Mucosa of descending colon (tissue), 3 donors: ENCODE measurements at regions of chr20 and their contacts with region 1.

Region 1: GRCh38 chr20:57596998-57597939 is 23.0 kb downstream of the ZBP1 start:
- DNase-seq: peak; percentile 77 to 88 (median 85)
- ATAC-seq: peak; percentile 76
- H3K4me3 ChIP-seq: no peak overlapping the region
- H3K4me1 ChIP-seq: peaks cover 19% of the 10 kb centered on the region
- CTCF ChIP-seq: peak; percentile 91

Region 2: DNA sequence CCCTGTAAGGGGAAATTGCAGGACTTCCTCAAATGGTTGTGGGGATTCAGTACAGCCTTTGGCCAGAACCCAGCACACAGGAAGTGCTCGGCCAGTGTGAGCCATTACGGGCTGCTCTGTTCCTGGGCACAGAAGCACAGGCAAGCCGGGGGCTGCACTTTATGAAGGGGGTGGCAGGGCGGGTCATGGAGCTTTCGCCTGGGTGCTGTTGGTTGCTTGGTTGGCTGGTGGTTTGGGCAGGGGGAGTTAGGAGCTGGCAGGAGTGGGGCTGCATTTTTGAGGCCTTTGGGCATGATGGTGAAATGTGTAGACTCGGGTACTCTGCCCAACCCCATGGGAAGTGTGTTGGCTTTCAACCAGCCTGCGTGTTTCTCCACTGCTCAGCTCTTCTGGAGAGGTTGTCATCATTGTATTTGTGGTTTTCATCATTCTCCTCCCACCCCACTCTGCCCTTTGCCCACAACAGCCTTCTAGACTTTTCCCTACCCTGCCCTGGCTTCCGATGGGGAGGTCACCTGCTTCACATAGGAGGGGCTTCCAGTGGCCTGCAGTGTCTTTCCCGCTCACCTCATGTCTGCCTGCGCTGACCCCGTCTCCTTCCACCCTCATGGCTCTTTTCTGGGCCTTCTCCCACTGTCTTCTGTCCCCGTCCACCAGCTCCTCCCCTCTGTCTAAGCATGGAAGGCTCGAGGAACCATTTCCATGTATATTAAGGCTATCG is 222.2 kb before region 1 on chr20:
- intact Hi-C with region 1: loop called in 1 of 2 experiments (anchors 10 kb)
- DNase-seq: peak in 2 of 3 donors; percentile 37 to 63
- ATAC-seq: peak; percentile 74
- H3K4me3 ChIP-seq: no peak overlapping the region
- H3K4me1 ChIP-seq: no peaks in the 10 kb centered on the region
- CTCF ChIP-seq: no peak

Region 3: GRCh38 chr20:57514273-57514751 is 83.0 kb before region 1 on chr20:
- intact Hi-C with region 1: loop called (anchors 1 to 2 kb)
- DNase-seq: peak in 2 of 3 donors; percentile 72 to 85
- ATAC-seq: peak; percentile 89
- H3K4me3 ChIP-seq: no peak overlapping the region
- H3K4me1 ChIP-seq: peaks cover 5% of the 10 kb centered on the region
- CTCF ChIP-seq: peak; percentile 50

Region 4: GRCh38 chr20:57544860-57545479 is 52.3 kb before region 1 on chr20:
- intact Hi-C with region 1: no loop called
- DNase-seq: peak in 1 of 3 donors; percentile 76
- ATAC-seq: peak; percentile 81
- H3K4me3 ChIP-seq: no peak overlapping the region
- H3K4me1 ChIP-seq: peaks cover 22% of the 10 kb centered on the region
- CTCF ChIP-seq: no peak

Region 5: GRCh38 chr20:58209652-58210397 is 612.6 kb after region 1 on chr20:
- intact Hi-C with region 1: loop called (anchors 2 to 10 kb)
- DNase-seq: peak; percentile 84 to 92 (median 90)
- ATAC-seq: peak; percentile 98
- H3K4me3 ChIP-seq: no peak overlapping the region
- H3K4me1 ChIP-seq: no peaks in the 10 kb centered on the region
- CTCF ChIP-seq: peak; percentile 100